HepG2 (cell line): ENCODE measurements at regions of chr21 and their contacts with region 1.

Region 1: DNA sequence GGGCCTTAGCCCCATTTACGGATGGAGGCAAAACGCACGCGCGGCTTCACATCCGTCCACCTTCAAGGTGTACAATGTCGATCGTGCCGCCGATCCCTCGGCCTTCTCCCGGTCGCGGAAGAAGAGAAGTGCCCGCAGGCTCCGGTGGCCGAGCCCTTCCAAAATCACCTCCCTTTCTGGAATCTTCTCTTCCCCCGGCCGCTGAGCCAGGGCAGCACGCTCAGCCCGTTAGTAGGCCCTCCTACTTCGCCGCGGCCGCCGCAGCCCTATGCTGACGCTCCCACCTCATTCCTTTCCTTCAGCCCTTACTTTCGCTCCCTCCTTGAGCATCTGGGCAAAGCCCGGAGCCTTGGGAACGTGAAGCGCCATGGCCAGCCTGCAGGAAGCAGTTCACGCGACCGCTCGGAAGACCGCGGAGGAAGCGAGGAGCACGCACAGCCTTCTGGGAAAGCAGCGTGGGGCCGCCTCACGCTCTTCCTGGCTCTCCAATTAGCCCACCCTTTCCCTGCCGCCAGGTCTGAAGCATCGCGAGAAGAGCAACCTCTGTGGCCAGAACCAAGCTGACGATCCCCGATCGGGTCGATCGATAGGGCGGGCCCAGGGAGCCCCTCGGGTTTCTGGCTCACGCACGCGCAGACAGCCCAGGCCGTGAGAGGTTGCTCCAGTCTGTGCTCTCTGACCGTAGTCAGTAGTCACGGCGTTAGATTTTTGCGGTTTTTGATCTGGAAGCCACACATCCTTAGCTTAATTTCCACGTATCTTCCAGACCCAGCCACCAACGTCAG is at the start of gene CCT8:
- DNase-seq: peak; percentile 98
- ATAC-seq: peak; percentile 98
- H3K4me3 ChIP-seq: peak within 1 kb of the TSS; percentile 94 to 95 (median 94)
- H3K27ac ChIP-seq: peak within 1 kb of the TSS; percentile 88
- H3K4me1 ChIP-seq: peaks cover 38% of the 10 kb centered on the region
- H3K27me3 ChIP-seq: no peaks in the 10 kb centered on the region; a peak in 1 of 5 replicates
- CTCF ChIP-seq: peak; percentile 11; the same call in 1 of the 2 replicates
- EP300 ChIP-seq: no peak
- POLR2A ChIP-seq: peak; percentile 95 to 97
- RAD21 ChIP-seq: no peak; the same call in 1 of the 2 replicates
- total RNA-seq, gene CCT8: 325 and 538 TPM in 2 replicates

Region 2: DNA sequence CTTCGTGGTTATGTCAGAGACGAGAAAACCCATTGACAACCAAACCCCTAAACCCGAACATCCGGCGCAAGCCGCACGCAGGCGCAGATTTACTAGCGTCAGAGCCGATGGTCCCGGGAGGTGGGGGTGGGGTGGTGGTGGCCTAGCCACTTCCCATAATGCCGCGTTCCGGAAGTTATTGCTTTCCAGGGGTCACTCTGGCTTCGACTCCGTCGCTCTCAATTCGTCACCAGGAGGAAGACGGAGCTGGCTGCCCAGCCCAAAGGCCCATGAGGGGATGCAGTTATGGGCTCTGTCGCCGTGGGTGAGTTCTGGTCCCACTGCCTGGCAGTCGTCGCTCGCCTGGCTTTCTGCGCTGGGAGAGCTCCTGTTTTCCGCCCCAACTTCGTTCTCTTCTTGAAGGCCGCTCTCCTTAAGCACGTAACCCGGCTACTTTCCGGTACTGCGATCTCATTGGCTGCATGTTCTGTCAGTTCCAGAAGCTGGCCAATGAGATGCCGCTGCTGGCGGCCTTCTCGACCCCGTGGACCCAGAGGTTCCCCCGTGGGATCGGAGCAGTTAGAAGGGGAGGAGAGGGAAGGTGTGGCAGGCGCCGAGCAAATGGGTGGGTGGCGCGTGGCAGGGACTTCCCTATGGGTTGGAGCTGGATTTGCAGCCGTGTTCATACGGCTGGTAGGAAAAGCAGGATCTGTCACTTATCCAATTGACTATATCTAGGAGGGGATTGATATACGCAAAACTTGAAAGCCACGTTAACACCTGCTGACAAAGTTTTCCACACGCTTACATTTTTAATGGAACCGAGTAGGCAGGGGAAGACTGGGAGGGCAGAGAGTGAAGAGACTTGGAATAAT is 48.7 kb before region 1 on chr21 and contains the start of gene USP16:
- CTCF ChIA-PET with region 1: no interaction called
- POLR2A ChIA-PET with region 1: interaction called, 26 read pairs
- in situ Hi-C with region 1: no loop called
- intact Hi-C with region 1: loop called (anchors 2 kb)
- DNase-seq: peak; percentile 95
- ATAC-seq: peak; percentile 98
- H3K4me3 ChIP-seq: peak within 1 kb of the TSS; percentile 79 to 94 (median 83)
- H3K27ac ChIP-seq: peak within 1 kb of the TSS; percentile 99
- H3K4me1 ChIP-seq: peaks cover 44% of the 10 kb centered on the region
- H3K27me3 ChIP-seq: no peaks in the 10 kb centered on the region; a peak in 1 of 5 replicates
- CTCF ChIP-seq: no peak
- EP300 ChIP-seq: 0 out of 4 replicates have a peak, but pooled peaks of 1 of the 2 experiments have one; percentile 5
- POLR2A ChIP-seq: peak; percentile 70 to 95
- RAD21 ChIP-seq: no peak; the same call in 1 of the 2 replicates
- total RNA-seq, gene USP16: 46.9 and 72.4 TPM in 2 replicates

Region 3: GRCh38 chr21:29053011-29053553 is 20.3 kb before region 1 on chr21:
- CTCF ChIA-PET with region 1: no interaction called
- POLR2A ChIA-PET with region 1: no interaction called
- in situ Hi-C with region 1: no loop called
- intact Hi-C with region 1: no loop called
- DNase-seq: no peak
- ATAC-seq: peak; percentile 19
- H3K4me3 ChIP-seq: no peak overlapping the region
- H3K27ac ChIP-seq: no peak overlapping the region
- H3K4me1 ChIP-seq: no peaks in the 10 kb centered on the region
- H3K27me3 ChIP-seq: no peaks in the 10 kb centered on the region
- CTCF ChIP-seq: no peak
- EP300 ChIP-seq: no peak
- POLR2A ChIP-seq: no peak
- RAD21 ChIP-seq: no peak

Region 4: DNA sequence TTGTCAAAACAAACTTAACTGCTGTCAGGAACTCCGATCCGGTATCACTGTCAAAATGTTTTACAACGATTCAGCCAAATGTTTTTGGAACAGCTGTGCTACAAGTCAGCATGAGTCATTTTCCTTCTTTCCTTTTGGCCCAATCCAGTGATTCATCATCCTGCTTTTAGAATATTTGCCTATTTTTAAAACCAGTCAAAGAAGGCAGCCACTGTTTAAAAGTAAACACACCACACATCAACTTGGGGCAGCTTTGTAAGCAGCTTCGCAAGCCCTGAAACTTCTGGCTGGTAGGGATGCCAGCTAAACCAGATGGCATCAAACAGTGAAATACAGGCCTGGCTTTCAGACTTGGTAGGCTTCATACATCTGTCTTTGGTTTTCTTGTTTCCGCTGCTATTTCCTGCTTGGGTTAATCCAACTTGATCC is 72.0 kb after region 1 on chr21:
- CTCF ChIA-PET with region 1: no interaction called
- POLR2A ChIA-PET with region 1: no interaction called
- in situ Hi-C with region 1: no loop called
- intact Hi-C with region 1: no loop called
- DNase-seq: peak; percentile 6
- ATAC-seq: no peak
- H3K4me3 ChIP-seq: no peak overlapping the region
- H3K27ac ChIP-seq: no peak overlapping the region
- H3K4me1 ChIP-seq: no peaks in the 10 kb centered on the region
- H3K27me3 ChIP-seq: no peaks in the 10 kb centered on the region; a peak in 1 of 5 replicates
- CTCF ChIP-seq: no peak
- EP300 ChIP-seq: no peak
- POLR2A ChIP-seq: no peak
- RAD21 ChIP-seq: no peak